Activated T-helper 1 cell treated with anti-CD3 and anti-CD28 coated beads, Interleukin-12 subunit alpha, Interleukin-12 subunit beta, Interleukin-2, Interleukin-4 antibody, amounts not matched to agents 30 ng/mL and 10 ng/mL and 1 ng/mL, durations not matched to agents 14 hours and 24 hours and 36 hours (primary cell): ENCODE measurements at regions of chr7 and their contacts with region 1.

Region 1: DNA sequence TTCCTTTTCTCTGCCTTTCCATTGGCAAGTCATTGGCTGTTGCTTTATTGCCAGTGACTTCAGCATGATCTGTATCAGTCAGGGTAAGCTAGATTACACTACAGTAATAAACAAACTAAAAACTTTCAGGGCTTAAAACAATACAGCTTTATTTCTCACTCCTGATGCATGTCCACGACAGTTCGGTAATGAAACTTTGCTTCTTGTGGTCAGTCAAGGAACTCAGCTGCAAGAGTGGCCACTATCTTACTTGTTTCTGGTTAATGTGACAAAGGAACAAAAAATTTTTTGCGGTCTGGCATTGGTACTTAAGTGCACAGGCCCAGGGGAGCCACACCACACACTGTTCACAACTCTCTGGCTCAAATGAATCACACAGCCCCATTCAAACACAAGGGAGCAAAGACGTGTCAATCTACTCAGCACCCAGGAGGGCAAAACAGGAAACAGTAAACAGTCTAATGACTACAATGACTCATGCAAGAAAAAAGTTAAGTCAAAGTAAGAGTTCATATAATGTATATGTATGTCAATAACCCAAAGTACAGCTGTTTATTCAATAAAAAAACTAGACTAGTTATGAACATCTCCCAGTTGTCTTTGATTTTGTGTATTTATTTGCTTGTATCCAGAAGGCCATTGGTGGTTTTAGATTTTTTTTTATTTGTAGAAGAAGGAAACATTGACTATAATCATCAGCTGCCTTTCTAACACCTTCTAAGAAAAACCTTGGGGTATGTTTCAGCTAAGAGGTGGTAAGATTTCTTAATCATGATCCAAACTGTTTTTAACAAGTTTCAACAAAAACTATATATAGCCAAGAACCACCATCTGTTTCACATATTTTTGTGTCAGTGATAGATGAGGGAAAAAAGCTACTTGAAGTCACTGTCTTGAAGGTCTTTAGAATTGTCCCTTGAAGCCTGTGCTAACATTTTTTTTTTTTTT is 134.4 kb upstream of the FAM3C start:
- DNase-seq: peak; percentile 72
- H3K4me3 Mint-ChIP-seq: peak overlapping the region; percentile 57
- H3K27ac Mint-ChIP-seq: peak overlapping the region; percentile 98
- H3K4me1 Mint-ChIP-seq: peaks cover 47% of the 10 kb centered on the region
- H3K27me3 Mint-ChIP-seq: no peaks in the 10 kb centered on the region

Region 2: GRCh38 chr7:120950539-120951308 is 579.8 kb before region 1 on chr7 and contains the start of gene ING3:
- intact Hi-C with region 1: loop called (anchors 2 kb)
- DNase-seq: peak; percentile 97
- H3K4me3 Mint-ChIP-seq: peak within 1 kb of the TSS; percentile 87
- H3K27ac Mint-ChIP-seq: peak within 1 kb of the TSS; percentile 92
- H3K4me1 Mint-ChIP-seq: peaks cover 34% of the 10 kb centered on the region
- H3K27me3 Mint-ChIP-seq: peaks cover 10% of the 10 kb centered on the region
- total RNA-seq, gene ING3: 26.7 and 28.6 TPM in 2 replicates

Region 3: GRCh38 chr7:121372376-121373010 is 158.0 kb before region 1 on chr7:
- intact Hi-C with region 1: loop called (anchors 1 kb)
- DNase-seq: no peak
- H3K4me3 Mint-ChIP-seq: peak overlapping the region; percentile 38
- H3K27ac Mint-ChIP-seq: peak overlapping the region; percentile 80
- H3K4me1 Mint-ChIP-seq: peaks cover 76% of the 10 kb centered on the region
- H3K27me3 Mint-ChIP-seq: no peaks in the 10 kb centered on the region

Region 4: DNA sequence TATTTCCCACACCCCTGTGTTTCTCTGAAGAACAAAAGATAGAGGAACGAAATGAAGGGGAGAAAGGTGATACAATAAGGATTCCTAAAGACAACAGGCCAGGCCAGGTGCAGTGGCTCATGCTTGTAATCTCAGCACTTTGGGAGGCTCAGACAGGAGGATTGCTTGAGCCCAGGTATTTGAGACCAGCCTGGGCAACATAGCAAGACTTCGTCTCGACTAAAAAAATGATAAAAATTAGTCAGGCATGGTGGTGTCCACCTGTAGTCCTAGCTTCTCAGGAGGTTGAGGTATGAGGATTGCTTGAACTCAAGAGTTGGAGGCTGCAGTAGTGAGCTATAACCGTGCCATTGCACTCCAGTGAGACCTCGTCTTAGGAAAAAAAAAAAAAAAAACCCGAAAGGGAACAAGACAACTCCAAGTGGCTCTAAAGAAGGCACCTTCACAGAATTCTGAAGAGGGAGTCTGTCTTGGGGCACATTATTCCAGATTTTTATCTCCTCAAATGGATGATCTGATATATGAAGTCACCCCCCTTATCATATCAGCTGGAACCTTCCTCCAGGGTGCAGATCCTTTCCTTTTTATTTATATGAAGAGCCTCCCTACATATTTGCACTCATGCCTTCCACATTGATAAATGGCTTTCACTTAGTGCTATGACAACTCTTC is 92.9 kb before region 1 on chr7:
- intact Hi-C with region 1: loop called (anchors 1 kb)
- DNase-seq: no peak
- H3K4me3 Mint-ChIP-seq: peak overlapping the region; percentile 68
- H3K27ac Mint-ChIP-seq: peak overlapping the region; percentile 85
- H3K4me1 Mint-ChIP-seq: peaks cover 41% of the 10 kb centered on the region
- H3K27me3 Mint-ChIP-seq: no peaks in the 10 kb centered on the region

Region 5: GRCh38 chr7:121500360-121501058 is 30.0 kb before region 1 on chr7:
- intact Hi-C with region 1: loop called (anchors 1 kb)
- DNase-seq: no peak
- H3K4me3 Mint-ChIP-seq: no peak overlapping the region
- H3K27ac Mint-ChIP-seq: peak overlapping the region; percentile 90
- H3K4me1 Mint-ChIP-seq: peaks cover 41% of the 10 kb centered on the region
- H3K27me3 Mint-ChIP-seq: no peaks in the 10 kb centered on the region

Region 6: DNA sequence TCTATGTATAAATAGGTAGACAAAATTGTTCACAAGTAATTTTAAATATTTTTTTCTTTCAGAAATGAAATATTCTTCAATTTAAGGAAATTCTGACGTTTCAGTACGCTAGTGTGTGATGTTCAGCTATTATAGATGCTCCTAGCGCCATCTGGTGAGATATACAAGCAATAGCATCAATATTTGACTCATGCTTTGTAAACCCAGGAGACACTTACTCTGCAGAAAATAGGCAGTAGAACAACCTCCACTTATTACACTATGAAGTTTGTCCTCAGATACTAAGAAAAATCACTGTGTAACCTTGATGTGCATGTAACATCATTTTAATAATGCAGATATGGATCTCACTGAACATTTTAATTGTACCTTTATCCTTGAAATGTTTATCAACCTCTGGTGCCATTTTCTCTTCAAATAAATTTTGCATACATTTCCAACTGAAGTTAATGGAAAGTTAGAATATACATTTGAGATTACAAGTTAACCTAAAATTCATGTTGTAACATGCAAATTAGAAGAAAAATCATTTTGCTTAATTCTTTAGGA is 17.1 kb after region 1 on chr7:
- intact Hi-C with region 1: loop called (anchors 1 kb)
- DNase-seq: no peak
- H3K4me3 Mint-ChIP-seq: no peak overlapping the region
- H3K27ac Mint-ChIP-seq: no peak overlapping the region
- H3K4me1 Mint-ChIP-seq: peaks cover 39% of the 10 kb centered on the region
- H3K27me3 Mint-ChIP-seq: peaks cover 9% of the 10 kb centered on the region